ENCODE measurements at regions of chr19 and their contacts with region 1.

Region 1: GRCh38 chr19:20167020-20167644 is at the start of gene ZNF486:
- DNase-seq: peak; percentile 89
- ATAC-seq: peak; percentile 94
- H3K4me3 Mint-ChIP-seq: peak within 1 kb of the TSS; percentile 99
- H3K27ac Mint-ChIP-seq: peak within 1 kb of the TSS; percentile 97
- H3K4me1 Mint-ChIP-seq: peaks cover 21% of the 10 kb centered on the region
- H3K27me3 Mint-ChIP-seq: no peaks in the 10 kb centered on the region
- total RNA-seq, gene ZNF486: 15.5 to 16.1 TPM

Region 2: DNA sequence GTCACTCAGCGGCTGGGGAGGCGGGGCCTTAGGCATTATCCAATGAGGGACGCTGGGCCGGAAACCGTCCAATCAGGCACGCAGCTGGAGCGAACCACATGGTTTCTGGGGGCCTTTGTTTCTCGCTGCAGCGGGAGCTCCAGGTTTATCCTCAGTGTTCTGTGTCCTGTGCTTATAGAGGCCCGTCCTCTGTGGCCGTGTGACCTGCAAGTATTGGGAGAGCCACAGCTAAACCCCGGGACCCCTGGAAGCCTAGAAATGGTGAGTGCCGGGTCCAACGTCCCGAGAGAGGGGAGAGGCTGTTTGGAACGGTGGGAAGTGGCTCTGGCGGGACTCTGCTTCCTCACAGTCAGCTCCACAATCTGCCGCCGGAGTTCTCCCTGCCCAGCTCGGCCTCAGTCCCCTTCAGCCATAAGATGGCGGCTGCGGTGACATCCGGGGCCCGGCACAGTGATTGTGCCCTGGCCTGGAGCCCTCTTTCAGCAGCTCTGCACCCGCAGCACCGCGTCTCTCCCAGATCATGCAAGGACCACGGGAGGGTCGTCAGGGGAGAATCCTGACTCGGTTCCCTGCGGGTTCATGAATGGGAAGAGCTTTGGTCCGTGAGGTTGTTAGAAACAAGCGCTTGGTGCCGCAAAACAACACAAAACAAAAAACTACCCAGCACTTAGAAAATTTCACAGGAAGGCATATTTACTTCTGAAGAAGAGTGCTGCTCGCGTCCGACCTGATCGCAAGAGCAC is 301.2 kb before region 1 on chr19 and contains the start of gene ZNF253:
- POLR2A ChIA-PET with region 1: interaction called, 13 read pairs
- DNase-seq: peak; percentile 91
- ATAC-seq: peak; percentile 93
- H3K4me3 Mint-ChIP-seq: peak within 1 kb of the TSS; percentile 97
- H3K27ac Mint-ChIP-seq: peak within 1 kb of the TSS; percentile 98
- H3K4me1 Mint-ChIP-seq: peaks cover 13% of the 10 kb centered on the region
- H3K27me3 Mint-ChIP-seq: no peaks in the 10 kb centered on the region
- total RNA-seq, gene ZNF253: 25.6 to 32.4 TPM

Region 3: DNA sequence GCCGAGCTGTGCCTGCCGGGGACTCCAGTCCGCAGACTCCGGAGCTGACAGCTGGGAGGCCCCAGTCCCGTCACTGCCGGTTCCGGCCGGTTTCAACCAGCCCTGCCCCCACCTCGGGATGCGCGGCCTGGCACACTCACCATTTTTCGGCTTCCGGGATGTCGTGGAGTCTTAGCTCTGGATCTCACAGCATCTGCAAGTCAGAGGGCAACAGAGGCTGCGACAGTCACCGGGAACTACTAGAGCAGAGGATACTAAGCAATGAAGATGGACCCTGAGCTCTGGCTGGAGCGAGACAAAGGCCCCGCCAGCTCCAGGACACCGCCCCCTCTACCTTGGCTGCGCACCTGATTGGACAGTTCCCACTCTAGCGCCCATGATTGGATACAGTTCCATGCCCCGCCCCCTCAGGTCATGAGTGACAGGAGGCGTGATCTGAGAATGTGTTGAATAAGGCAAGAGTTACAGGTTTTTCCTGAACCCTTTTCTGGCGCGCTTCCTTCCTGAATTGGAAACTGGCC is 127.9 kb before region 1 on chr19 and contains the start of gene ZNF682:
- POLR2A ChIA-PET with region 1: interaction called, 11 read pairs
- DNase-seq: peak; percentile 90
- ATAC-seq: peak; percentile 99
- H3K4me3 Mint-ChIP-seq: peak within 1 kb of the TSS; percentile 96
- H3K27ac Mint-ChIP-seq: peak within 1 kb of the TSS; percentile 96
- H3K4me1 Mint-ChIP-seq: peaks cover 11% of the 10 kb centered on the region
- H3K27me3 Mint-ChIP-seq: peaks cover 4% of the 10 kb centered on the region
- total RNA-seq, gene ZNF682: 13.1 to 16.9 TPM

Region 4: DNA sequence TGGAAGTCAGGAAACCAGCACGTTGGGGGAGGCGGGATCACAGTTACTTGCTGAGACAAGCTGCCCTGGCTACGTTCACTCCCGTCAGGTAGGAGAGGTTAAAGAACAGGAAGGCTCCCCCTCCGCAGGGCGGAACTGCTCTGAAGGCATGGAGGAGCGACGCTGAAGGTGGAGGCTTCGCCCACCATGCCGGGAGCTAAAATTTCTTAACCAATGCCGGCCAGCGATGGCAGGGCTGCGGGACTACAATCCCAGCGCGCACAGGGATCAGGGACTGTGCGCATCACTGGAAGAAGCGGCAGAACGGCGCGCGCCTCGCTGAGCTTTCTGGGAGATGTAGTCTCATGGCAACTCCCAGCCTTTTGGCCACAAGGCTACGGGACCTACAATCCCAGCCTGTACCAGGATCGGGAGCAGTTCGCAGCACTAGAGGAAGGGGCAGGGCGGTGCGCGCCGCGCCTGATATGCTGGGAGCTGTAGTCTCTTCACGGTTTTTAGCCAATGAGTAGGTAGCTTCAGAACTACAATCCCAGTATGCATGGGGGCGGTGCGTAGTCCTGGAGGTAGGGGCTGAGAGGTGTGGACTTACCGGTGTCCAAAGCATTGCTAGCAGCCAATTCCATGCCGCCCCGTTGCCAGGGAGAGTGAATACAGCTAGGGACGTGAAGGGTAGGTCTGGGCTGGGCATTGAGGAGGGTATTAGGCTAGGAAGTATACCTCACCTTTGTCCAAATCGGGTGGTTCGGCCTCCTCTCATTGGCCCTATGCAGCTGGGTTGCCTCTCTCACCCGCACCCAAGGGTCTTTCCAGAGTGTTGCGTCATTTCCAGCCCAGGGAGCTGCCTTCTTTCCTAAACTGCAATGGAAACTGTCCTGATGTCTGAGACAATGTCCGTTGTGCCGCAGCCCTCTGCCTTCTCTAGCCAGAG is 115.0 kb before region 1 on chr19:
- POLR2A ChIA-PET with region 1: interaction called, 12 read pairs
- DNase-seq: peak; percentile 71
- ATAC-seq: peak; percentile 98
- H3K4me3 Mint-ChIP-seq: peak overlapping the region; percentile 98
- H3K27ac Mint-ChIP-seq: peak overlapping the region; percentile 87
- H3K4me1 Mint-ChIP-seq: peaks cover 8% of the 10 kb centered on the region
- H3K27me3 Mint-ChIP-seq: no peaks in the 10 kb centered on the region

Region 5: DNA sequence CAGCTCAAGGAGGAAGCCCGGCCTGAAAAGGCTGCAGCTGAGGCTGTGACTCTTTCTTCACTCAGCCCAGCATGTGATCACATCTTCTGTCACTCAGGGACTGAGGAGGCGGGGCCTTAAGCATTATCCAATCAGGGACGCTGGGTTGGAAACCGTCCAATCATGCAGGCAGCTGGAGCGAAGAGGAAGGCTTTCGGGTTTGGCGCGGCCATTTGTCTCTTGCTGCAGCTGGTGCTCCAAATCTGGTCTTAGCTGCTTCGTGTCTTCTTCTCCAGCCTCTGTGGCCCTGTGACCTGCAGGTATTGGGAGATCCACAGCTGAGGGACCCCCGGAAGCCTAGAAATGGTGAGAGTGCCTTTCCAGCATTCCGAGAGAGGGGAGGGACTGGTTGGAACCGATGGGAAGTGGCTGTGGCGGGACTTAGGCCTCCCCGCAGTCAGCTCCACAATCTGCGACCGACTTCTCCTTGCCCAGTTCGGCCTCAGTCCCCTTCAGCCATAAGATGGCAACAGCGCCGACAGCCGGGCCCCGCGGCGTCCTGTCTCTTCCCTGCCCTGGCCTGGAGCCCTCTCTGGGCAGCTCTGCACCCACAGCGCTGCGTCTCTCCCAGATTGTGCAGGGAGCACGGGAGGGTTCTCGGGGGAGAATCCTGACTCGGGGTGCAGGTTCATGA is 89.2 kb before region 1 on chr19 and contains the start of gene ZNF90:
- POLR2A ChIA-PET with region 1: interaction called, 31 read pairs
- DNase-seq: peak; percentile 80
- ATAC-seq: peak; percentile 99
- H3K4me3 Mint-ChIP-seq: peak within 1 kb of the TSS; percentile 96
- H3K27ac Mint-ChIP-seq: peak within 1 kb of the TSS; percentile 87
- H3K4me1 Mint-ChIP-seq: peaks cover 17% of the 10 kb centered on the region
- H3K27me3 Mint-ChIP-seq: no peaks in the 10 kb centered on the region
- total RNA-seq, gene ZNF90: 19.8 to 21.0 TPM

Region 6: DNA sequence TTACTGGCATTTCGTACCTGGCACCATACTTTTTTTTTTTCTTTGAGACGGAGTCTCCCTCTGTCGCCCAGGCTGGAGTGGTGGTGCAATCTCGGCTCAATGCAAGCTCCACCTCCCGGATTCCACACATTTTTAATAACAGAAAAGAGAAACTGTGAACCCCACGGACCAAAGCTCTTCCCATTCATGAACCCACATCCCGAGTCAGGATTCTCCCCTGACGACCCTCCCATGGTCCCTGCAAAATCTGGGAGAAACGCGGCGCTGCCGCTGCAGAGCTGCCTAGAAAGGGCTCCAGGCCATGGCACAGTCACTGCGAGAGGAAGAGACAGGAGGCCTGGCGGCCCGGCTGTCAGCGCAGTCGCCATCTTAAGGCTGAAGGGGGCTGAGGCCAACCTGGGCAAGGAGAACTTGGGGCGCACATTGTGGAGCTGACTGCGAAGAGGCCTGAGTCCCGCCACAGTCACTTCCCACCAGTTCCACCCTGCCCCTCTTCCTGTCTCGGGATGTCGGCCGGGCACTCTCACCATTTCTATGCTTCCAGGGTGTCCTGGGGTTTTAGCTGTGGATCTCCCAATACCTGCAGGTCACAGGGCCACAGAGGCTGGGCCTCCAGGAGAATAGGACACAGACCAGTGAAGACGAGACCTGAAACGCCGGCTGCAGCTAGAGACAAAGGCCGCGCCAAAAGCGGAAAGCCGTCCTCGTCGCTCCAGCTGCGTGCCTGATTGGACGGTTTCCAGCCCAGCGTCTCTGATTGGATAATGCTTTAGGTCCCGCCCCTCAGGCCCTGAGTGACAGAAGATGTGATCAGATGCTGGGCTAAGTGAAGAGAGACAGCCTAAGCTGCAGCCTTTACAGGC is 70.9 kb after region 1 on chr19:
- POLR2A ChIA-PET with region 1: interaction called, 32 read pairs
- DNase-seq: peak; percentile 87
- ATAC-seq: peak; percentile 94
- H3K4me3 Mint-ChIP-seq: peak overlapping the region; percentile 99
- H3K27ac Mint-ChIP-seq: peak overlapping the region; percentile 98
- H3K4me1 Mint-ChIP-seq: peaks cover 5% of the 10 kb centered on the region
- H3K27me3 Mint-ChIP-seq: no peaks in the 10 kb centered on the region

Measured in activated naive CD8-positive, alpha-beta T cell treated with anti-CD3 and anti-CD28 coated beads, Interleukin-2, amount 10 ng/mL, durations not matched to agents 7 days and 5 days (primary cell).